ENCODE measurements at regions of chr6 and their contacts with region 1.

Region 1: GRCh38 chr6:149150801-149151398 is 166.6 kb upstream of the TAB2 start:
- DNase-seq: no peak
- ATAC-seq: no peak
- H3K4me3 ChIP-seq: no peak overlapping the region
- H3K4me3 Mint-ChIP-seq: no peak overlapping the region
- H3K27ac ChIP-seq: no peak overlapping the region
- H3K27ac Mint-ChIP-seq: peak overlapping the region; percentile 23
- H3K4me1 ChIP-seq: peaks cover 40% of the 10 kb centered on the region
- H3K4me1 Mint-ChIP-seq: peaks cover 73% of the 10 kb centered on the region
- H3K27me3 ChIP-seq: no peaks in the 10 kb centered on the region
- H3K27me3 Mint-ChIP-seq: no peaks in the 10 kb centered on the region
- CTCF ChIP-seq: no peak

Region 2: GRCh38 chr6:149233056-149233715 is 82.3 kb after region 1 on chr6:
- CTCF ChIA-PET with region 1: no interaction called
- POLR2A ChIA-PET with region 1: no interaction called
- intact Hi-C with region 1: loop called in 1 of 2 experiments (anchors 5 kb)
- DNase-seq: peak in 7 of 9 experiments; percentile 26 to 65 (median 47)
- ATAC-seq: peak; percentile 54
- H3K4me3 ChIP-seq: peak overlapping the region in 1 of 2 experiments; percentile 17
- H3K4me3 Mint-ChIP-seq: peak overlapping the region; percentile 38
- H3K27ac ChIP-seq: peak overlapping the region; percentile 31 to 45
- H3K27ac Mint-ChIP-seq: peak overlapping the region; percentile 93
- H3K4me1 ChIP-seq: peaks cover 41% of the 10 kb centered on the region
- H3K4me1 Mint-ChIP-seq: peaks cover 43% of the 10 kb centered on the region
- H3K27me3 ChIP-seq: no peaks in the 10 kb centered on the region
- H3K27me3 Mint-ChIP-seq: no peaks in the 10 kb centered on the region
- CTCF ChIP-seq: no peak